Activated T-helper 1 cell treated with anti-CD3 and anti-CD28 coated beads, Interleukin-12 subunit alpha, Interleukin-12 subunit beta, Interleukin-2, Interleukin-4 antibody, amounts not matched to agents 30 ng/mL and 10 ng/mL and 1 ng/mL, durations not matched to agents 14 hours and 24 hours and 36 hours (primary cell): ENCODE measurements at regions of chr5 and their contacts with region 1.

Region 1: DNA sequence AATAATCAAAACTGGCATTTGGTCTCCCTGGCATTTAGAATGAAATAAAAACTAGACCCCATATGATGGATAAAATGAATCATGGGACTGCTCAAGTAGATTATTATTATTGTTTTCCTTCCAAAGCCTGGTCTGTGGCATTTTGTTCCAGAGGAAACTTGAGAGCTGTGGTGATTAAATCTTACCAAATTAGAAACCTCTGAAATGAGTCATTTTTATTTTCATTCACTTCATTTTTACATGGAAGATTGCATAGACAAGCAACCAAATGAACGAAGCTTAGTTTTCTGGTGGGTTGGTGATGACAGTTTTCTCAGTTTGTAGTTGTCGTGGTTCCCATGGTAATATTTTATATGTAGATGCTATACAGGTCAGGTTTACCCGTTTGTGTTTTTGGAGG is 23.4 kb downstream of the PAM start:
- DNase-seq: no peak
- H3K4me3 Mint-ChIP-seq: peak overlapping the region; percentile 45
- H3K27ac Mint-ChIP-seq: peak overlapping the region; percentile 85
- H3K4me1 Mint-ChIP-seq: peaks cover 73% of the 10 kb centered on the region
- H3K27me3 Mint-ChIP-seq: no peaks in the 10 kb centered on the region

Region 2: DNA sequence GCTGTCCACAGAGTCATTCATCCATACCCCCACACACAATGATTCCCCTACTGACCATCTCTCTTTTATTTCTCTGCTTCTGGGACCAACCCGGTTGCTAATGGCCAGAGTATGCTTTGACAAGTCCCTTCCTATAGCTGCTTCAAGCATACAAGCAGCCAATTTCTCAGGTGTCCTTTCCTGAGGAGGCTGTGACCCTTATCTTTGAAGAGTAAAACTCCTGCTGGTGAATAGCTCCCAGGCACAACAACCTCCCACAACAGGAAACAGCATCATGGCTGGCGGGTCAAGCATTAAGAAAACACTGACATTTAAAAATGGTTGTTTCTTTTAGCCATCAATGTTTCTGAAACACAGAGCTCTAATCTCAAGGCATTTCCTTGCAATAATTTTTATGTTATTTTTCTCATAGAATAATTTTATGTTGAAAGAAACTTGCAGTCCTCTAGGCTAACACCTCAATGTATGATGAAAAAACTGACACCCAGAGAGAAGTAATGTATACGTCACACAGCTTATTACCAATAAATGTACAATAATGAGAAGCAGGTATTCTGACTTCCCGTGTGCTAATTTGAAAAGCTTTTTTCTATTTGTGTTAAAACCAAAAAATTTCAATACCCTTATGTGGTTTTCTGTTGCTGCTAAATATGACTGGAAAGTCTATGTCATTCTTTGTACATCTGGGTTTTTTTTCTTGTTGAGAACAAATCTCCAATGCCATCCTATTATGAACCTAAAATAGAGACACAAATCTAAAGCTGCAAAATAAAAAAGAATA is 30.9 kb before region 1 on chr5:
- intact Hi-C with region 1: loop called (anchors 1 kb)
- DNase-seq: no peak
- H3K4me3 Mint-ChIP-seq: peak overlapping the region; percentile 20
- H3K27ac Mint-ChIP-seq: peak overlapping the region; percentile 63
- H3K4me1 Mint-ChIP-seq: peaks cover 21% of the 10 kb centered on the region
- H3K27me3 Mint-ChIP-seq: no peaks in the 10 kb centered on the region

Region 3: GRCh38 chr5:102767862-102768261 is 10.6 kb before region 1 on chr5:
- intact Hi-C with region 1: loop called (anchors 1 kb)
- DNase-seq: no peak
- H3K4me3 Mint-ChIP-seq: no peak overlapping the region
- H3K27ac Mint-ChIP-seq: peak overlapping the region; percentile 65
- H3K4me1 Mint-ChIP-seq: peaks cover 39% of the 10 kb centered on the region
- H3K27me3 Mint-ChIP-seq: no peaks in the 10 kb centered on the region

Region 4: DNA sequence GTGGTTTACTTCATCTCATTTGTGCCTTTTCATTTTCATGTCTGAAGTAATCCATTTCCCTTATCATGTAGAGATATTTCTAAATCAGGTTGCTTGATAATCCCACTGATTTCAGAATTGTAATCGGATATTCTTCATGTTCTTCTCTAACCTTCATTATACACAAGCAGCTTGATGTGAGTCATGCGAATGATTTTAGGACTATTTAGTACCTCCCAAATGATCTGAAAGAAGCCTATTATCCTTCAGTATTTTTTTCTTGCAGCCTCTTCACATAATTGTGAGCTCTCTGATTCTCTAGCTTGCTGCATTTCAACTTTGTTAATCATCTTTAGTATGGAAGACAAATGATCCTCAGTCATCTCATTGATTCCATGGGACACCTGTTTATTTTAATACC is 159.4 kb after region 1 on chr5:
- intact Hi-C with region 1: loop called (anchors 5 kb)
- DNase-seq: no peak
- H3K4me3 Mint-ChIP-seq: no peak overlapping the region
- H3K27ac Mint-ChIP-seq: no peak overlapping the region
- H3K4me1 Mint-ChIP-seq: peaks cover 16% of the 10 kb centered on the region
- H3K27me3 Mint-ChIP-seq: no peaks in the 10 kb centered on the region

Region 5: GRCh38 chr5:103119765-103120606 is 341.5 kb after region 1 on chr5 and contains the starts of genes GIN1 and PPIP5K2:
- intact Hi-C with region 1: loop called (anchors 1 kb)
- DNase-seq: peak; percentile 96
- H3K4me3 Mint-ChIP-seq: peak within 1 kb of the TSS; percentile 93
- H3K27ac Mint-ChIP-seq: peak within 1 kb of the TSS; percentile 96
- H3K4me1 Mint-ChIP-seq: peaks cover 41% of the 10 kb centered on the region
- H3K27me3 Mint-ChIP-seq: no peaks in the 10 kb centered on the region
- total RNA-seq, gene GIN1: 8.6 and 9.3 TPM in 2 replicates
- total RNA-seq, gene PPIP5K2: 47.6 and 52.7 TPM in 2 replicates

Region 6: GRCh38 chr5:103340717-103341388 is 562.4 kb after region 1 on chr5:
- intact Hi-C with region 1: loop called (anchors 10 kb)
- DNase-seq: no peak
- H3K4me3 Mint-ChIP-seq: no peak overlapping the region
- H3K27ac Mint-ChIP-seq: no peak overlapping the region
- H3K4me1 Mint-ChIP-seq: peaks cover 13% of the 10 kb centered on the region
- H3K27me3 Mint-ChIP-seq: peaks cover 11% of the 10 kb centered on the region